Spleen (tissue), 13 donors: ENCODE measurements at regions of chrX and their contacts with region 1.

Region 1: GRCh38 chrX:93874554-93874953 is 200.5 kb downstream of the FAM133A start:
- DNase-seq: no peak
- H3K4me3 ChIP-seq: no peak overlapping the region
- H3K27ac ChIP-seq: no peak overlapping the region
- H3K4me1 ChIP-seq: no peaks in the 10 kb centered on the region
- H3K27me3 ChIP-seq: no peaks in the 10 kb centered on the region
- CTCF ChIP-seq: peak in 5 of 11 experiments; percentile 8 to 41 (median 23)
- POLR2A ChIP-seq: no peak

Region 2: GRCh38 chrX:93932476-93933220 is 58.1 kb after region 1 on chrX:
- intact Hi-C with region 1: no loop called
- DNase-seq: no peak
- H3K4me3 ChIP-seq: no peak overlapping the region
- H3K27ac ChIP-seq: no peak overlapping the region
- H3K4me1 ChIP-seq: no peaks in the 10 kb centered on the region
- H3K27me3 ChIP-seq: no peaks in the 10 kb centered on the region
- CTCF ChIP-seq: no peak
- POLR2A ChIP-seq: no peak

Region 3: GRCh38 chrX:94058728-94059382 is 184.3 kb after region 1 on chrX:
- intact Hi-C with region 1: loop called (anchors 10 kb)
- DNase-seq: no peak
- H3K4me3 ChIP-seq: no peak overlapping the region
- H3K27ac ChIP-seq: no peak overlapping the region
- H3K4me1 ChIP-seq: no peaks in the 10 kb centered on the region
- H3K27me3 ChIP-seq: no peaks in the 10 kb centered on the region
- CTCF ChIP-seq: peak in 2 of 11 experiments; percentile 19 to 33
- POLR2A ChIP-seq: no peak